T-cell (primary cell): ENCODE measurements at regions of chr22 and their contacts with region 1.

Region 1: DNA sequence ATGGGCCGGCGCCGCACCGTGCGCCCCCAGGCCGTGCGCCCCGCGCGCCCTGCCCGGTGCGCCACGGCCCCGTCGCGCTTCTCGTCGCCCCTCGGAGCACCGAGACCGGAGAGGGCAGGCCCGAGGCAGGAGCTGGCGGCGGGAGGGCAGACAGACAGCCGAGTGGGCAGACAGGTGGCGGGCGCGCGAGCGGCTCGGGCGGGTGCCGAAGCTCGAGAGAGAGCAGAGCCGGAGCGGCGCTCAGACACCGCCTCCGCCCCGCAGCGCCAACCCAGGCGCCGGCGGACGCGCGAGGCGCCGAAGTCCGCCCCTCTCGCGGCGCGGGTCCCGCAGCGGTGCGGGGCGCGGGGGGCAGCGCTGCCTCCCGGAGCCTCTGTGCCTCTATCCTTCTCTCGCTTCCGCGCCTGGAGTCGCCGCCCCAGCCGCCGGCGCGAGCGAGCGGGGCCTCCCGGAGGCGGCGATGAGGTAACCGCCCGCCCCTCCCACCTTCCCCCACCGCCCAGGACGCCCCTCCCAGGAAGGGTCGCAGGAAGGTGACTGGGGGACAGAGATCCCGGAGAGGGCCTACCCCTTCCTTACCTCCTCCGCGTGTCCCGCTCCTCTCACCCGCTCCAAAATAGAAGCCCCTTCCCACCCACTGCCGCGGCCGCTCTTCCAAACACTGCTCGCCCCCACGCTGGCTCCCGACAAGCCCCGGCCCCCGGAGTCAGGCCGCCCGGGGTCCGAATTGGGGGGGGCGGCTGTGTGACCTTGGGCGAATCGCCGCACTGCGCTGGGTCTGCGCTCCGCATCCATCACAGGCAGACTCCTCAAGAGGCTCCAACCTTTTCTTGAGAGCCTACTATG is at the start of gene RASL10A:
- DNase-seq: no peak
- ATAC-seq: no peak
- H3K4me3 ChIP-seq: peak within 1 kb of the TSS in 1 of 2 donors; percentile 32
- H3K4me3 Mint-ChIP-seq: peak within 1 kb of the TSS; percentile 21 to 75 (median 25)
- H3K27ac ChIP-seq: no peak within 1 kb of the TSS
- H3K27ac Mint-ChIP-seq: no peak within 1 kb of the TSS
- H3K4me1 ChIP-seq: peaks cover 2 to 32% of the 10 kb centered on the region in 2 experiments
- H3K4me1 Mint-ChIP-seq: peaks cover 13 to 32% (median 17%) of the 10 kb centered on the region in 3 donors
- H3K27me3 ChIP-seq: peaks cover 9 to 69% of the 10 kb centered on the region in 2 experiments
- H3K27me3 Mint-ChIP-seq: peaks cover 30 to 43% of the 10 kb centered on the region in 2 donors
- total RNA-seq, gene RASL10A: 0.33 to 1.2 (median 0.71) TPM in 4 of 5 donors, not detected in the other

Region 2: GRCh38 chr22:27850000-27850465 is 1465.5 kb before region 1 on chr22:
- CTCF ChIA-PET with region 1: no interaction called
- POLR2A ChIA-PET with region 1: interaction called in 1 of 2 experiments, 23 read pairs
- DNase-seq: no peak
- ATAC-seq: no peak
- H3K4me3 ChIP-seq: no peak overlapping the region
- H3K4me3 Mint-ChIP-seq: no peak overlapping the region
- H3K27ac ChIP-seq: no peak overlapping the region
- H3K27ac Mint-ChIP-seq: no peak overlapping the region
- H3K4me1 ChIP-seq: no peaks in the 10 kb centered on the region
- H3K4me1 Mint-ChIP-seq: peaks cover 0 to 6% (median 0%) of the 10 kb centered on the region in 3 donors
- H3K27me3 ChIP-seq: no peaks in the 10 kb centered on the region
- H3K27me3 Mint-ChIP-seq: no peaks in the 10 kb centered on the region

Region 3: DNA sequence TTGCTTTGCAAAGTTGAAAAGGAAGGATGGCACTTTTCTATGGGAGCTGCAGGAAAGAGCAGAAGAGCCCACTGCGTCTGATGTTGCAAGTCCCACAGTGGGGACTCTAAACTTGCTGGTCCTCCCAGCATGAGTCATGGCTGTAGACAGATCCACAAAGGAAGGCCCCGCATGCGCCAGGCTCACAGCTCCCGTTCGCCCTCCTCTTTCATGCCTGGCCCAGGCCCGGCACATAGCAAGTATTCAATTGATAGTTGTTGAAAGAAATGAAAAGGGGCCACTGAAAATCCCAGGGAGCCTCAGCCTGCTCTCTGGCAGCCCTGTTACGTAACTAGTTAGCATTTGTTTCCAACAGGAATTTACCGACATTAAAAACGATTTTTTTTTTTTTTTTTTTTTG is 54.0 kb after region 1 on chr22:
- CTCF ChIA-PET with region 1: no interaction called
- POLR2A ChIA-PET with region 1: no interaction called
- DNase-seq: no peak
- ATAC-seq: no peak
- H3K4me3 ChIP-seq: no peak overlapping the region
- H3K4me3 Mint-ChIP-seq: no peak overlapping the region
- H3K27ac ChIP-seq: no peak overlapping the region
- H3K27ac Mint-ChIP-seq: no peak overlapping the region
- H3K4me1 ChIP-seq: peaks cover 4 to 5% of the 10 kb centered on the region in 2 experiments
- H3K4me1 Mint-ChIP-seq: peaks cover 15 to 29% (median 25%) of the 10 kb centered on the region in 3 donors
- H3K27me3 ChIP-seq: no peaks in the 10 kb centered on the region
- H3K27me3 Mint-ChIP-seq: no peaks in the 10 kb centered on the region